Psoas muscle (tissue), 8 donors: ENCODE measurements at regions of chr19 and their contacts with region 1.

Region 1: DNA sequence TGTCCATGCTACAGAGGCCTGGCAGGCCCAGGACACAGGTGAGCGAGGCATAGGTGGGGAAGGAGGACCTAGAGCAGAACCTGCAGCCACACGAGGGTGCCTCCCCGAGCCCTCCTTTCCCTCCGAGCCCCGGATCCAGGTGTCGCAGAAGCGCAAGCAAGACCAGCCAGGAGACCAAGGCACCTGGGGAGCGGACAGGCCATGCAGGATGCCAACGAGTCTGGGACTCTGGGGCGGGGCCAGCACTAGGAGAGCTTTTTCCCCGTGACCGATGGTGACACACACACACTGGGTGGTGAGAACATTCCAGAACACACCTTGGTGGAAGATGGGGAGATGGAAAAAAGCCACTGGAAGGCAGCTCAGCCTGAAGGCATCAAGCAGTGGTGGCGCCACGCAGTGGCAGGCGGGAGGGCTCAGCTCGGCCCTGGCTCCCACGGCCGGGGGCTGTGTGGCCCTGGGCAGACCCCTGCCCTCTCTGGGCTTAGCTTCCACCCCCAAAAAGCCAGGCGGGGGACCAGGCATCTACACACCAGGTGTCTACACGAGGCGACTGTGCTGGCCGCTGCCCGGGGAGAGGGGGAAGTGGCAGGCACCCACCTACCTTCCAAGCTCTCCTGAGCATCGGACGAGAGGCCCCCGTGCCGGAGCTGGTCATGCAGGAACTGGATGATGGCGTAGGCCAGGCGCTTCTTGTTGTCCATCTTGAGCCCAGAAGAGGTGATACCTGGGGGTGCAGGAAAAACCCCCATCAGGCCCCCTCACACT is 14.5 kb downstream of the SGTA start:
- DNase-seq: peak in 1 of 2 donors; percentile 52
- ATAC-seq: no peak
- H3K4me3 ChIP-seq: no peak overlapping the region
- H3K27ac ChIP-seq: peak overlapping the region; percentile 16
- H3K4me1 ChIP-seq: peaks cover 33% of the 10 kb centered on the region
- H3K27me3 ChIP-seq: no peaks in the 10 kb centered on the region
- CTCF ChIP-seq: no peak

Region 2: DNA sequence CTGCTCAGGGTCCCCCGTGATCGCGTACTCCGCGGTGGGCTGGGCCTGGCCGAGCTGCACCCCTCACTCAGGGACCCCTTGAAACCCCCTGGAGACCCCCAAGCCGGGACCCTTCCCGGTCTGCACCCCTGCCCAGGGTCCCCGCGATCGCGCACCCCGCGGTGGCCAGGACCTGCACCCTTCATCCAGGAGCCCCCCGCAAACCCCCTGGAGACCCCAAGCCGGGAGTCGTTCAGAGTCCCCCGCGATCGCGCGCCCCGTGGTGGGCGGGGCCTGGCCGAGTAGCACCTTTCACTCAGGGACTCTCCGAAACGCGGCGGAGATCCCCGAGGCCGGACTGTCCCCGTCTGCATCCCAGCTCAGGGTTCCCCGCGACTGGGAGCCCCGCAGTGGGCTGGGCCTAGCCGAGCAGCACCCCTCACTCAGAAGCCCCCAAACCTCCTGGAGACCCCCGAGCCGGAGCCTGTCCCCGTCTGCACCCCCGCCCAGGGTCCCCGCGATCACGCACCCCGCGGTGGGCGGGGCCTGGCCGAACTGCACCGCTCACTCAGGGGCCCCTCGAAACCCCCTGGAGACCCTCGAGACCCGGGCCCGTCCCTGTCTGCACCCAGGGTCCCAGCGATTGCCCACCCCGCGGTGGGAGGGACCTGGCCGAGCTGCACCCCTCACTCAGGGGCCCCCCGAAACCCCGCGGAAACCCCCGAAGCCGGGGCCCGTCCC is 312.5 kb before region 1 on chr19:
- intact Hi-C with region 1: no loop called
- DNase-seq: peak in 1 of 2 donors; percentile 40
- ATAC-seq: peak; percentile 8 to 35 (median 28)
- H3K4me3 ChIP-seq: peak overlapping the region; percentile 95
- H3K27ac ChIP-seq: peak overlapping the region; percentile 9
- H3K4me1 ChIP-seq: peaks cover 8% of the 10 kb centered on the region
- H3K27me3 ChIP-seq: no peaks in the 10 kb centered on the region
- CTCF ChIP-seq: no peak

Region 3: GRCh38 chr19:2733930-2734588 is 34.5 kb before region 1 on chr19:
- intact Hi-C with region 1: loop called in 1 of 2 experiments (anchors 5 kb)
- DNase-seq: peak in 1 of 2 donors; percentile 34
- ATAC-seq: no peak
- H3K4me3 ChIP-seq: no peak overlapping the region
- H3K27ac ChIP-seq: no peak overlapping the region
- H3K4me1 ChIP-seq: peaks cover 1% of the 10 kb centered on the region
- H3K27me3 ChIP-seq: no peaks in the 10 kb centered on the region
- CTCF ChIP-seq: no peak

Region 4: DNA sequence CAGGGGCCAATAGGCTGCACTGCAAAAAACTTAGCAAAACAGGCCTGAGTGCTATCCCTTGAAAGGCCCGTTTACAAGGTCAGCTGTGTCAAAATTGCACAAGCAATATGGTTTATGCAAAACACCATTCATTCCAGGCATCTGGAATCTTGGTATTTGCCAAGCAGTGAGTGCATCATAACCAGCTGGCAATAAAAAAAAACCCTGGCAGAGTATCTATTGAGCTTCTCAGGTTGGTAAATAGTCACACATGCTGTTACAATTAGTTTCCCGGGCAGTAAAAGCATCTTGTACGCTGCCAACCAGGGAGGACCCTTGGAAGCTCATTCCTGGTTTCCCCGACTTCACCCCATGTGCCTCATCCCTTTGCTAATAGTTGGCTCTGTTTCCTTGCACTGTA is 155.0 kb after region 1 on chr19:
- intact Hi-C with region 1: no loop called
- DNase-seq: no peak
- ATAC-seq: peak in 3 of 4 donors; percentile 35 to 65 (median 56)
- H3K4me3 ChIP-seq: no peak overlapping the region
- H3K27ac ChIP-seq: no peak overlapping the region
- H3K4me1 ChIP-seq: no peaks in the 10 kb centered on the region
- H3K27me3 ChIP-seq: no peaks in the 10 kb centered on the region
- CTCF ChIP-seq: no peak